ENCODE measurements at regions of chr19 and their contacts with region 1.

Region 1: GRCh38 chr19:6362027-6362350 is 658 bp downstream of the CLPP start:
- DNase-seq: no peak
- H3K4me3 ChIP-seq: peak overlapping the region; percentile 70 to 98 (median 90)
- H3K27ac ChIP-seq: peak overlapping the region; percentile 54 to 96 (median 91)
- H3K27me3 ChIP-seq: no peaks in the 10 kb centered on the region
- CTCF ChIP-seq: no peak

Region 2: DNA sequence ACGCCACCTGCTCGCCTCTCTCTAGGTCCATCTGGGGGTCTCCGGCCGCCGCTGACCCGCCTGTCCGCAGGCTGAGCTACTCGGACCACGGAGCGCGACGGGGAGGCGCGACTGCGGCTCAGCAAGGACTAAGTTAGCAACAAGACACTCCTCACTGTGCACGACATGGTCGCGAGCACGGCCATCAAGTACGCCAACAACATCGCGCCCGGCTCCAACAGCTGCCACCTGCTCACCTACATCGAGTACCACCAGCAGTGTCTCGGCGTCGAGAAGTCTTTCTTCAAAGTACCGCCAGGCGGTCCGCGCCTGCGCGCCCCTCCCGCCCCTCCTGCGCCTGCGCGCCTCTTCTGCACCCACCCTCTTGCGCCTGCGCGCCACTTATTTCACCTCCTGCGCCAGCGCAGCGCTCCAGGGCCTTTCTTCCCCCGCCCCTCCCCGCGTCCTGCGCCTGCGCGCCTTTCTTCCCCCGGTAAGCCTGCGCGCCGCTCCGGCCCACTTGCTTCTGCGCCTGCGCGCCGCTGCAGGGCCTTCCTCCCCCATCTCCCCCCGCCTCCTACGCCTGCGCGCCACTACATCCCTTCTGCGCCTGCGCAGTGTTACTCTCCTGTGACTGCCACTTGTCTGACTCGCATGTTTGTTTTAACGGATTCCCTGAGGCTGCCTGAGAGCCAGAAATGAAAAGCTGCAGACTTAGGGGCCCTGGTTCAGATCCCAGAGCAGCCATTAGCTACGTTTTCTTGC is 162.6 kb before region 1 on chr19:
- intact Hi-C with region 1: loop called in 1 of 2 experiments (anchors 5 kb)
- DNase-seq: peak; percentile 90 to 96 (median 93)
- H3K4me3 ChIP-seq: peak overlapping the region; percentile 47 to 100 (median 85)
- H3K27ac ChIP-seq: peak overlapping the region; percentile 55 to 96 (median 90)
- H3K27me3 ChIP-seq: no peaks in the 10 kb centered on the region
- CTCF ChIP-seq: peak in 46 of 56 donors; percentile 13 to 56 (median 40)

Region 3: DNA sequence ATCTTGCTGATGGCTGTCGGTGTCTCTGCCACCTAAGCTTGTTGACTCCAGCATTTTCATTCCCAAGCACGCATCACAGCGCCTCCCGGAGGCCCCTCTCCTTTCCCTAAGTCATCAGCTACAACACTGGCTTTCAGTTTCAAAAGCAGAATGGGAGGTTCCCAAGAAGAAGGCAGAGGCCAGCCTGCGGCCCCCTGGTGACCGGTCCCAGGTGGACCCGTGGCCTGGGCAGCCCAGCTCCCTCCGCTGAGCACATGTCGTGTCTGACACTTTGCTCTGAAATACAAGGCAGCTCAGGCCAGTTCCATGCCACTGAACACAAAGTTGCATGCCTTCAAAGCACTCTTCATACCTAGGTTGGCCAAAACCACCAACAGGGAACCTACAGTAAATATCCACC is 90.7 kb before region 1 on chr19:
- intact Hi-C with region 1: no loop called
- DNase-seq: peak in 1 of 10 donors; percentile 48
- H3K4me3 ChIP-seq: peak overlapping the region in 54 of 59 donors; percentile 14 to 67 (median 46)
- H3K27ac ChIP-seq: peak overlapping the region in 49 of 59 donors; percentile 5 to 91 (median 80)
- H3K27me3 ChIP-seq: no peaks in the 10 kb centered on the region
- CTCF ChIP-seq: peak in 6 of 56 donors; percentile 10 to 22 (median 12)

Region 4: DNA sequence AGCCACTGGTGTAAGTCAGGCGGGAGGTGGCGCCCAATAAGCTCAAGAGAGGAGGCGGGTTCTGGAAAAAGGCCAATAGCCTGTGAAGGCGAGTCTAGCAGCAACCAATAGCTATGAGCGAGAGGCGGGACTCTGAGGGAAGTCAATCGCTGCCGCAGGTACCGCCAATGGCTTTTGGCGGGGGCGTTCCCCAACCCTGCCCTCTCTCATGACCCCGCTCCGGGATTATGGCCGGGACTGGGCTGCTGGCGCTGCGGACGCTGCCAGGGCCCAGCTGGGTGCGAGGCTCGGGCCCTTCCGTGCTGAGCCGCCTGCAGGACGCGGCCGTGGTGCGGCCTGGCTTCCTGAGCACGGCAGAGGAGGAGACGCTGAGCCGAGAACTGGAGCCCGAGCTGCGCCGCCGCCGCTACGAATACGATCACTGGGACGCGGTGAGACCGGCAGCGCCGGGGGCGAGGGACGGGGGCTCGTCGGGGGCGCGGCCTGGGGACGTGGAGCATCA is 10.7 kb after region 1 on chr19 and contains the start of gene ALKBH7:
- intact Hi-C with region 1: loop called in 1 of 2 experiments (anchors 1 kb)
- DNase-seq: peak; percentile 87 to 100 (median 99)
- H3K4me3 ChIP-seq: peak within 1 kb of the TSS; percentile 65 to 99 (median 93)
- H3K27ac ChIP-seq: peak within 1 kb of the TSS; percentile 45 to 100 (median 97)
- H3K27me3 ChIP-seq: no peaks in the 10 kb centered on the region
- CTCF ChIP-seq: peak in 31 of 56 donors; percentile 2 to 61 (median 32)
- total RNA-seq, gene ALKBH7: 39.9 to 75.3 (median 52.4) TPM

Region 5: DNA sequence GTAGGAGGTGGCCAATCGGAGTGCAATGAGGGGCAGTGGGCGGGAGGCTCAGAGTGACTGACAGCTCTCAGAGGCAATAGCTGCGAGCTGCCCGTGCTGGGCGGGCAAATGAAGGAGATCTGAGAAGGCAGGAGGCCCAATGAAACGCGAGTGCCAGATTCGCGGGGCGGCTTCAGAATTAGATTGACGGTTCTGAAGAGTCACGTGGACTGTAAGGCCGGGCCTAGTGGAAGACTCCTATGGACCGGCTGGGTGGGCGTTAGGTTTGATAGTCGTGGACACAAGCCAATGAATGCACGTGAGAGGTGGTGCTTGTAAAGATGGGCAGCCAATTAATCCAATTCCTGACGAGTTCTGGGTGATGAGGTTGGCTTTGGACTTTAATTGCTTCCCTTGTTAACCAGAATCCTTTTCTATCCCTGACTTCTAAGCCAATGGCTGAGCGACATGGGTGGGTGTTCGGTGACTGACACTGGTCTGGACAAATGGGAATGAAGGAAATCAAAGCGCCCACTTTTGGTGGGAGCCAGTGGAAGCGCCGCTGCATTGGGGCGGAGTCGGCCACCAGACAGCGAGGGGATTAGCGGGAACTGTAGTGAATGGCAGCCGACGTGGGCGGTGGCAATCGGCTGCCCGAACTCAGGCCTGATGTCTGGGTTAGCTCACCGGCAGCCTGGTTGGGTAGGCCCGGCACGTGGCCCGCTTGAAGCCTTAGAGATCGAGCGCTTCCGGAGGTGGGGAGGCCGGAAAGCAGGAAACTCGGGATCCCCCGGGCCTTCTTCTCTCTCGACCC is 63.1 kb after region 1 on chr19:
- intact Hi-C with region 1: loop called in 1 of 2 experiments (anchors 1 kb)
- DNase-seq: peak; percentile 97 to 100 (median 100)
- H3K4me3 ChIP-seq: peak overlapping the region in 58 of 59 donors; percentile 2 to 92 (median 56)
- H3K27ac ChIP-seq: peak overlapping the region; percentile 18 to 96 (median 88)
- H3K27me3 ChIP-seq: no peaks in the 10 kb centered on the region
- CTCF ChIP-seq: peak in 22 of 56 donors; percentile 2 to 38 (median 18)